ENCODE measurements at regions of chr10 and their contacts with region 1.

Region 1: DNA sequence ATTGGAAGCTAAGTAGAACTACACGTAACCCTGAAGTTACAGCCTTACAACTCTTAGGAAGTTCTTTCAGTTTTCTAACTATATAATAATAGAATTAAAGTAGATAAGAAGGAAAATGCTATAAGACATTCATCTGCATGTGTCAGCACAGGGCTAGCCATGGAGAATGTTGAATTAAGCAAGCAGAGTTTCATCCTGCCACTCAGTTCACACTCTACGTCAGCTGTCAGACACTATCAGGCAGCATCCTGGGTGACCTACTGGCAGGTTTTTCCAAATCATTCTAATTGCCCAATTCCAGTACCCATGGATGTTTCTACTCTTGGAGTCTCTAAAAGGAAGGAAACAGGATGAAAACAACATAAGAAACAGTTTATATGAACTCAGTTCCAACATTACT is 45.0 kb upstream of the LRRTM3 start:
- DNase-seq: no peak
- CTCF ChIP-seq: no peak

Region 2: DNA sequence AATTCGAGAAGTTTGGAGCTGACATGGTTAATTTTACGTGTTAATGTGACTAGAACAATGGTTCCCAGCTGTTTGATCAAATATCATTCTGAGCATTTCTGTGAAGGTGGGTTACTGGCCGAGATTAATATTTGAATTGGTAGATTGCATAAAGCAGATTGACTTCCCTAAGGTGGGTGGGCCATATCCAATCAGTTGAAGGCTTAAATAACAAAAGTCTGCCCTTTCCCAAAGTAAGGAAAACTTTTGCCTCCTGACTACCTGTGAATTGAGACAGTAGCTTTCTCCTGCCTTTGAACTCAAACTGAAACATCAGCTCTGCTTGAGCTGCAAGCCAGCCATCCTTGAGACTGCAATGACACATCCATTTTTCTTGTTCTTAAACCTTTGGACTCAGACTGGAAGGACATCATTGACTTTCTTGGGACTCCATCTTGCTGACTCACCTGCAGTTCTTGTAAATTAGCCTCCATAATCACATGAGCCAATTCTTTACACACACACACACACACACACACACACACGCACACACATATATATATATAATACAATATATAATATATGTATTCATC is 18.1 kb before region 1 on chr10:
- CTCF ChIA-PET with region 1: no interaction called
- POLR2A ChIA-PET with region 1: no interaction called
- DNase-seq: no peak
- CTCF ChIP-seq: no peak

Region 3: GRCh38 chr10:66892871-66893270 is 12.0 kb after region 1 on chr10:
- CTCF ChIA-PET with region 1: interaction called, 12 read pairs
- POLR2A ChIA-PET with region 1: no interaction called
- DNase-seq: no peak
- CTCF ChIP-seq: no peak

Region 4: DNA sequence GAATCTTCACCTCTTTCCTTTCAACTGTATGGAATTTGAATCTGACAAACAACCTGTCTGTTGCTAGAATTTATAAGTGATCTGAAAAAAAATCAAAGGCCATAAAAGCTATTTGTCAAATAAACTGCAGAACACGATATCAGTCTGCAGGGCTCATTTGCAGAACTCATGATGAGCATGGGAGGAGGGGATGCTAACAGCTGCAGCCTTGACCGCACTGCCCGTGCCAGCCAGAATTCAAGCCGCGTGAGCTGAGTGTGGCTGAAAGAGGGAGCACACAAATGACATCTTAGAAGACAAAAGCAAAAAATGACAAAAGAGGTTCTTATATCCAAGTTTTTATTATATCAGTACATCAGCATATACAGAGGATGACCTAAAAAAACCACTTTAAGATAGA is 60.7 kb after region 1 on chr10:
- CTCF ChIA-PET with region 1: no interaction called
- POLR2A ChIA-PET with region 1: no interaction called
- DNase-seq: no peak
- CTCF ChIP-seq: no peak

Measured in GM10248 (cell line).